ENCODE measurements at regions of chr17 and their contacts with region 1.

Region 1: DNA sequence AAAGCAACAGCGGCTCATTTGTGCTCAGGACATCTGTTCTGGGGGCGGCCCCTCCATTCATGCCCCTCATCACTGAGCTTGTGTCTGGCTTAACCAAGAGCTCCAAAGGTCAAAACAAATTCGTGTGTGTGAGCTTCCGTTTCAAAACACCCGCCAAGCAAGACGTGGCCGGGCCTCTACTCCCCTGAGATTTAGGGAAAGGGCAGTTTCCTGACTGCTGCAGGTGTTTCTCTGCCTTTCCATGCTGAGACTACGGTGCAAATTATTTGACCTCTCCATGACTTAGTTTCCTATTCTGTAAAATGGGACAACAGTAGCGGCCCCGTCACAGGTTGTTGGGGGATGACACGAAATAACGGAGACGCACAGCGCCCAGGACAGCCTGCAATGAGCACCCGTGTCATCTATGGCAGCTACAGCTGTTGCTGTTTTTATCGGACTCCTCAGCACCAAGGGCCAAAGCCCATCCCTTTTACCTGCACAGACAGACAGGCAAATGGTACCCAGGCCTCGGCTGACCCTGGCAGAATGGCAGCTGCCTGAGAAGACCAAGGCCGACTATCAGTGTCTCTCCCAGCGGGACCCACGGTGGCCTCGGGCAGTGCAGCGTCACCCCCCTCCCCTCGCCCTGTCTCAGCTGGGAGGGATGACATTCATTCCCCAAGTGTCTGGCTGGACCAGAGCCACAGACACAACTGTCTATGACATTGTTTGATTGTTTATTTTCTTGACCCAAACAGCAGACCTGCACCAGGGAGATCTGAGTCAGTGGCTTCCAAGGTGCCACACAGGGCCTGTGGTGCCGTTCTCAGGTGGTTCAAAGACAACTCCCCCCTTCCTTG is 50.7 kb upstream of the DOC2B start:
- DNase-seq: peak in 1 of 2 experiments; percentile 29
- H3K4me3 ChIP-seq: no peak overlapping the region
- H3K27ac ChIP-seq: no peak overlapping the region
- H3K4me1 ChIP-seq: peaks cover 0 to 26% (median 5%) of the 10 kb centered on the region in 4 experiments; a peak in 5 of 7 replicates
- H3K27me3 ChIP-seq: no peaks in the 10 kb centered on the region
- CTCF ChIP-seq: no peak
- EP300 ChIP-seq: no peak
- POLR2A ChIP-seq: no peak
- RAD21 ChIP-seq: no peak

Region 2: DNA sequence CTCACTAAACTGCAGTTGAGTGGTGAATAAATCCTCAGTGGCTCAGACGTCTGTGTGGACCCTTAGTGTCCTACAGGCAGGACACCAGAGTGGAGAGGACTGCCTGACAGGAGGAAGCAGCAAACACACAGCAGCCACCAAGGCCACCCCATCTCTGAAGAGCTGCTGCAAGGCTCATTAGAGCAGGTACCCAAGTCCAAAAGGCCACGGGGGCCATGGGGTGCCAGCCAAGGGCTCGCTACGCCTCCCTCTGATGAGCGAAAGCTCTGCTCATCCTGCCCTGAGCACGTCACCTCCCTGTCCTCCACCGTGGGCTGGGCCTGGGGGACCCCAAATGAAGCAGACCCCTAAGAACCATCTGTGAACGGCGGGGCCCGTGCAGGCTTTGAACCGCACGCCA is 19.3 kb after region 1 on chr17:
- CTCF ChIA-PET with region 1: interaction called, 16 read pairs
- POLR2A ChIA-PET with region 1: interaction called, 5 read pairs
- DNase-seq: peak in 1 of 2 experiments; percentile 39
- H3K4me3 ChIP-seq: no peak overlapping the region
- H3K27ac ChIP-seq: no peak overlapping the region
- H3K4me1 ChIP-seq: no peaks in the 10 kb centered on the region
- H3K27me3 ChIP-seq: no peaks in the 10 kb centered on the region
- CTCF ChIP-seq: no peak
- EP300 ChIP-seq: no peak
- POLR2A ChIP-seq: no peak
- RAD21 ChIP-seq: no peak